ENCODE measurements at regions of chr7 and their contacts with region 1.

Region 1: DNA sequence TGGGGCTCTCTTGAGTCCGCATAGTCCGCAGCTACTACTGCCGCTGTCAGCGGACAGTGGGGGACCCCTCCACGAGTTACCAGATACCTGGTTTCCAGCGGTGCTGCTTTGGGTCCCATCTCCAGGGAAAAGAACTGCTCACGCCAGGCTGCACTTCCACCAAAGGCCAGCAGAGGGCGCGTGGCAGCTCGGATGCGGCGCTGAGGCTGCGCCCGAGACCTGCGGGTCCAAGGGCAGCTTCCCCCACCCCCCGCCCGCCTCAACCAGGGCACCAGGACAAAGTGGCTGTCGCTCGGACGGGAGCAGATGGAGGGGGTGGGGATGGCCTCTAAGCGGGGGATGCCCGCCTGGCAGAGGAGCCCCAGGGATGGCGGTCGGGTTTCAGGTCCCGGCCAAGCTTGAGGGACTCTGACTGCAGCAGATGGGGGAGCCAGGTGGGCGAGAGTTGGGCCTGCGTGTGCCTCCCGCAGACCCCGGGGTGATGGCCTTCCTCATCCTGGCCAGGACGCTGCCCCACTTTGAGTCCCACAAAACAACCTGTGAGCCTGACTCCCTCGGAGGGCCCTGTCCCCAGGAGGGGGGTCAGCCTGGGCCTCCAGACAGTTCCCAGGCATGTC is 23.8 kb upstream of the ZNF735 start:
- DNase-seq: peak in 2 of 3 donors; percentile 70 to 72
- ATAC-seq: peak; percentile 31 to 53
- H3K4me3 ChIP-seq: no peak overlapping the region
- H3K27ac ChIP-seq: no peak overlapping the region
- H3K4me1 ChIP-seq: no peaks in the 10 kb centered on the region
- H3K27me3 ChIP-seq: no peaks in the 10 kb centered on the region

Region 2: DNA sequence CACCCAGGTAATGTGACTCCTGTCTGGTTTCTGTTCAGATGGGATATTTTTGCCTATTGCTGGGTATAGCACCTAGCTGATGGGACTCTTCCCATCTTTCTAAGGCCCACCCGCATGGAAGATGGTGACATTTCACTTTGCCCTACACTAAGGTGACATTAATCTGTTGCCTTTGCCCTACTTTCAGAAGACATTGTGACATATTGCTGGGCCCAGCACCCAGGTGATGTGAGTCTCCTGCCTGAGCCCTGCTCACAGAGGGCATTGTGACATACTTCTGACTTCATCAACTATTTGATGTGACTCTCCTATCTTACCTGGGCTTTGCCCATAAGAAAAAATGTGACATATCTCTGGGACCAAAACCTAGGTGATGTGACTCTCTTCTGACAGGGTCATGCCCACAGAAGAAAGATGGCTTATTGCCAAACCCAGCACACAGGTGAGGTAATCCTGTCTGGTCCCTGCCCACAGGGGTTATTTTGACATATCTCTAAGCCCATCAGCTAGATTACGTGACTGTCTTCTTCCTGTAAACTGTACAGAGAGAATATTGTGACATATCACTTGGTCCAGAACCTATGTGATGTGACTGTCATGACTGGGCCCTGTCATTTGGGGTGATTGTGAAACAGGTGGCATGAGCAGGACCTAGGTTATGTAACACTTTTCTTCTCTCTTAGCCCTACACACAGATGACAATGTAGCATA is 428.3 kb after region 1 on chr7:
- intact Hi-C with region 1: loop called in 2 of 4 experiments (anchors 5 kb)
- DNase-seq: no peak
- ATAC-seq: no peak
- H3K4me3 ChIP-seq: no peak overlapping the region
- H3K27ac ChIP-seq: no peak overlapping the region
- H3K4me1 ChIP-seq: no peaks in the 10 kb centered on the region
- H3K27me3 ChIP-seq: no peaks in the 10 kb centered on the region